H1 (cell line): ENCODE measurements at regions of chr13 and their contacts with region 1.

Region 1: DNA sequence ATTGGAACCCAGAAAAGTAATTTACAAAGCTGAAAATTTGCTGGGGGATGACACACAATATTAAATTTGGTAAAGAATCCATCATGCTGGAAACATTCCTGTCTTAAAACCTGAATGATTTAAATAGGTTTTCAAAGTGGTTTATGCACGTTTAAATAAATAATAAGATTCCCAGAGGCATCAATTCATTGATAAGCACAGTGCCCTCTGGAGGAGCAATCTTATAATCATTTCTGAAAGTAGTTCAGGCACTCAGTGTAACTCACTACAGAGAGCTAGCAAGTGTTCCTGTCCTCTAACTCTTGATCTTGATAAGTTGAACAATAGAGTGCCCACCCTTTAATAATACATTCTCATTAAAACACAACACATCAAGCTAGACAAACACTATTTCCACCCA is 43.5 kb upstream of the SHISA2 start:
- DNase-seq: no peak
- H3K4me3 ChIP-seq: no peak overlapping the region
- H3K27ac ChIP-seq: no peak overlapping the region
- H3K4me1 ChIP-seq: peaks cover 0 to 2% (median 0%) of the 10 kb centered on the region in 4 experiments; a peak in 3 of 7 replicates
- H3K27me3 ChIP-seq: peaks cover 0 to 1% (median 0%) of the 10 kb centered on the region in 4 experiments; a peak in 2 of 7 replicates
- CTCF ChIP-seq: peak in 1 of 3 experiments; percentile 33; a peak in 1 of 4 replicates
- EP300 ChIP-seq: no peak
- POLR2A ChIP-seq: no peak
- RAD21 ChIP-seq: no peak

Region 2: GRCh38 chr13:26112843-26113242 is 17.5 kb after region 1 on chr13:
- CTCF ChIA-PET with region 1: interaction called, 20 read pairs
- POLR2A ChIA-PET with region 1: no interaction called
- DNase-seq: no peak
- H3K4me3 ChIP-seq: no peak overlapping the region
- H3K27ac ChIP-seq: no peak overlapping the region
- H3K4me1 ChIP-seq: no peaks in the 10 kb centered on the region
- H3K27me3 ChIP-seq: no peaks in the 10 kb centered on the region
- CTCF ChIP-seq: peak in 2 of 3 experiments; percentile 44 to 69; a peak in 2 of 4 replicates
- EP300 ChIP-seq: no peak
- POLR2A ChIP-seq: no peak
- RAD21 ChIP-seq: peak; percentile 80 to 81